Heart left ventricle (tissue), 16 donors: ENCODE measurements at regions of chr10 and their contacts with region 1.

Region 1: GRCh38 chr10:32207544-32207943 is 139.4 kb downstream of the EPC1 start:
- DNase-seq: peak; percentile 20 to 63 (median 34)
- ATAC-seq: peak in 3 of 4 donors; percentile 42 to 83 (median 61)
- H3K4me3 ChIP-seq: no peak overlapping the region
- H3K27ac ChIP-seq: no peak overlapping the region
- H3K4me1 ChIP-seq: peaks cover 0 to 4% (median 0%) of the 10 kb centered on the region in 12 donors
- H3K27me3 ChIP-seq: no peaks in the 10 kb centered on the region
- CTCF ChIP-seq: peak; percentile 39 to 74 (median 58)
- POLR2A ChIP-seq: no peak

Region 2: DNA sequence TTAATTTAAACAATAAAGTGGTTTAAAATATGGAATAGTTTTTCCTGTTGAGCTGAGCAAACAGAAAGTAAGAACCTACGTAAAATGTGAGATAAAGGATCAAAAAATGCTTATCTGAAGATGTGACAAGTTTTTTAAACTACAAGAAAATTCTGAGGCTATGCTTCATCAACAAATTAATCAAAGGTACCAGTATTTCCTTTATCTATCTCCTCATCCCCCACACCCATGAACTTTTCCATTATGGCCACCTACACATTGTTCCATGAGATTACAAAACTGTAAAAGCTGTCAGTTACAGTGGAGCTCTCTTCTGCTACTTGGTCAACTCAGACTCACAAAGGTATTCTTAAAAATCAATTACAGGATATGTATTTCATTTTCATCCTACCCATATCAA is 356.3 kb before region 1 on chr10:
- intact Hi-C with region 1: loop called in 2 of 10 experiments (anchors 5 to 10 kb)
- DNase-seq: no peak
- ATAC-seq: no peak
- H3K4me3 ChIP-seq: no peak overlapping the region
- H3K27ac ChIP-seq: no peak overlapping the region
- H3K4me1 ChIP-seq: peaks cover 0 to 11% (median 0%) of the 10 kb centered on the region in 12 donors
- H3K27me3 ChIP-seq: no peaks in the 10 kb centered on the region
- CTCF ChIP-seq: no peak
- POLR2A ChIP-seq: no peak

Region 3: GRCh38 chr10:31883397-31883796 is 324.1 kb before region 1 on chr10:
- intact Hi-C with region 1: no loop called
- DNase-seq: no peak
- ATAC-seq: no peak
- H3K4me3 ChIP-seq: no peak overlapping the region
- H3K27ac ChIP-seq: peak overlapping the region in 1 of 12 donors; percentile 35
- H3K4me1 ChIP-seq: peaks cover 0 to 29% (median 12%) of the 10 kb centered on the region in 12 donors
- H3K27me3 ChIP-seq: no peaks in the 10 kb centered on the region
- CTCF ChIP-seq: no peak
- POLR2A ChIP-seq: no peak